RWPE1 (cell line): ENCODE measurements at regions of chr1 and their contacts with region 1.

Region 1: DNA sequence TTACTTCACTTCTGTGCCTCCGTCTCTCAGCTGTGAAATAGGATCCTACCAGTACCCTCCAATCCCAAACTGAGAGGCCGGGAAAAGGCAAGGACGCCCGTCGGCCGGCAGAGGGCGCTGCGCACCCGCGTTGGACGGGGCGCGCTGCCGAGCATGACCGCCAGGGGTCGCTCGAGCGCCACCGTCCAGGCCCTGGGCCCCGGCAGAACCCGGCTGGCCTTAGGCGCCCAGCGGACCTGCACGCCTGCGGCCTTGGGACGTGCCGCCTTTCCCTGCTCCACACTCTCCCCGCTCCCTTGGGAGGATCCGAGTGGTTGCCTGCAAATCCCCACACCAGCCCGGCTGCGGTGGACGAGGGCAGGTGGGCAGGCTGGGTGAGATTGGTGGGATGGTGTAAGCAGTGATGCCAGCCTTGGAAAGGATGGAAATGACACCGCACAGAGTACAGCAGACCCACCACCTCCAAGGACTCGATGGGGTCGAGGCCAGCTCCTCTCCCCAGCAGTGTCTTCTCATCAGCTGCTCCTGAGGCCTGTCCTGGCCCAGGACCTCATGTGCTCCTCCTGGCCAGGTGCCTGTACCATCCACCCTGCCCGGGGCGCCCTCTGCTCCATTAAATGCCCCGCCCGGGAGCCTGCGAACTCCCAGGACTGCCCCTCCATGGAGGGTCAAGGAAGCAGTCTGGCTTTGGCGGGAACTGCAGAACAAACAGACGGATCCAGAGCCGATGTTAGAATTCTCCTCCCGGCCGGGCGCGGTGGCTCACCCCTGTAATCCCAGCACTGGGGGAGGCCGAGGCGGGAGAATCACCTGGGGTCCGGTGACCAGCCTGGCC is 47.4 kb upstream of the LBR start:
- DNase-seq: peak; percentile 85
- H3K27ac ChIP-seq: no peak overlapping the region
- CTCF ChIP-seq: peak; percentile 100

Region 2: GRCh38 chr1:225182716-225183115 is 292.5 kb before region 1 on chr1:
- CTCF ChIA-PET with region 1: no interaction called
- POLR2A ChIA-PET with region 1: no interaction called
- DNase-seq: no peak
- H3K27ac ChIP-seq: no peak overlapping the region
- CTCF ChIP-seq: no peak

Region 3: DNA sequence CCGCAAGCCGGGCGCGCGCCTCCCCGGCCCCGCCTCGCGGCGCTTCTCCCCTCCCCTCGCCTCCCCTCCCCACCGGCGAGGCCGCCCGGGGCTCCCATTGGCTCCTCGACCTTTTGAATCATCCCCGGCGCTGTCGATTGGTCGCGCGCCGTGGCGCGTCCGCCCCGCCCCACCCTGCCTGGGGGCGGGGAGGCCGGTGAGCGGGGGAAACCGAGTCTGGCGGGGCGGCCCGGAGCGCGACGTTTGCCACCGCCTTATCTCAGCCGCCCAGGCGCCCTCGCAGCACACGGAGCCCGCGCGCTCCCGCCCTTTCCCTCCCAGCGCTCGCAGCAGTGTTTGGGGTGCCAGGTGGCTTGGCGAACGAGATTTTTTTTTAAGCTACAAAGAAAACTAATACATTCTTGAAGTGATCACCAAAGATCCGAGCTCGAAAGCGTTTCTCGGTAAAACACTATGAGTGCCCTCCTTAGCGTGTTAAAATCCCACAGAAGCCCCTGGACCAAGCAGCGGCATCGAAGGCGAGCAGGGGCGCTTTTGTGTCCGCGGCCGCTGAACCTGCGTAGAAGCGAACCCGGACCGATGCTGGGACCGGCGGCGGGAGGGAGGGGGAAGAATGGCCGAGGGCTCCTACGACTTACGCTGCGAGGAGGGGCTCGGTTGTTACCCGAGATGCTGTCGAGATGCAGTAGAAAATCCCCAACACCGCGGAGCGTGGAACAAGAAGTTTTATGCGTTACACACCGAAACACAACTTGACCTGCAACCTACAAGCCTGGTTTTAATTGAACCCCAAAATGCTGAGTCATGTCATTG is 46.9 kb before region 1 on chr1:
- CTCF ChIA-PET with region 1: interaction called, 14 read pairs
- POLR2A ChIA-PET with region 1: interaction called, 3 read pairs
- DNase-seq: peak; percentile 98
- H3K27ac ChIP-seq: peak overlapping the region; percentile 94
- CTCF ChIP-seq: no peak

Region 4: GRCh38 chr1:225485991-225486530 is 10.9 kb after region 1 on chr1:
- CTCF ChIA-PET with region 1: interaction called, 34 read pairs
- POLR2A ChIA-PET with region 1: no interaction called
- DNase-seq: no peak
- H3K27ac ChIP-seq: no peak overlapping the region
- CTCF ChIP-seq: no peak

Region 5: GRCh38 chr1:225635649-225636048 is 160.4 kb after region 1 on chr1:
- CTCF ChIA-PET with region 1: no interaction called
- POLR2A ChIA-PET with region 1: no interaction called
- DNase-seq: no peak
- H3K27ac ChIP-seq: no peak overlapping the region
- CTCF ChIP-seq: no peak

Region 6: DNA sequence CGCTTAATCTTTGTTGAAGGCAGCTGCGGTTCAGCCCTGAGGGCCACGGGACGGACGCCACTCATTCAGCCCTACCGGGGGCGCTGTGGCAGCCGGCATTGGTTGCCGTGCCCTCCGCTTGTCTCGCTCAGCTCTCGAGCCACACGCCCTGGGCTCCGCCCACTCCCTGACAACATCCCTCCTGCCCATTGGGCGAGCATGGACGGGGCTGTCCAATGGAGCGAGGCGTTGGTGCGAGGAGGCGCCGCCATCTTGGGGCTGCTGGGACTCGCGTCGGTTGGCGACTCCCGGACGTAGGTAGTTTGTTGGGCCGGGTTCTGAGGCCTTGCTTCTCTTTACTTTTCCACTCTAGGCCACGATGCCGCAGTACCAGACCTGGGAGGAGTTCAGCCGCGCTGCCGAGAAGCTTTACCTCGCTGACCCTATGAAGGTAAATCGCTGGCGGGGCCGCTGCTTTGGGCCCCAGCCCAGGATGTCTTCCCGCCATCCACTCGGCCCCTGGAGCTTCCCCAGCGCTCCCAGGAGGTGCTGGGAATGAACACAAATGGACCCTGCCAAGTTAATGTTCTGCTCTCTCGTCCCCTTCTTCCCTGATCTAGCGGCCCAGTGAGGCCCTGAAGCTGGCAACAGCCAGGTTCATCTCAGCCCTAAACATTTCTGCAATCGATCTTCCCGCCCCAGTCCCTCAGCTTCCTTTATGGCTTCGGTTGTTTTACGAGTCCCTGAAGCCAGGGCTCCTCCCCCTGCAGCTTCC is 302.6 kb after region 1 on chr1 and contains the start of gene SRP9:
- CTCF ChIA-PET with region 1: interaction called, 39 read pairs
- POLR2A ChIA-PET with region 1: interaction called, 3 read pairs
- DNase-seq: peak; percentile 100
- H3K27ac ChIP-seq: peak within 1 kb of the TSS; percentile 98
- CTCF ChIP-seq: peak; percentile 95

Region 7: GRCh38 chr1:225881969-225882693 is 406.9 kb after region 1 on chr1 and contains the start of gene TMEM63A:
- CTCF ChIA-PET with region 1: interaction called, 10 read pairs
- POLR2A ChIA-PET with region 1: no interaction called
- DNase-seq: peak; percentile 97
- H3K27ac ChIP-seq: peak within 1 kb of the TSS; percentile 88
- CTCF ChIP-seq: peak; percentile 50

Region 8: DNA sequence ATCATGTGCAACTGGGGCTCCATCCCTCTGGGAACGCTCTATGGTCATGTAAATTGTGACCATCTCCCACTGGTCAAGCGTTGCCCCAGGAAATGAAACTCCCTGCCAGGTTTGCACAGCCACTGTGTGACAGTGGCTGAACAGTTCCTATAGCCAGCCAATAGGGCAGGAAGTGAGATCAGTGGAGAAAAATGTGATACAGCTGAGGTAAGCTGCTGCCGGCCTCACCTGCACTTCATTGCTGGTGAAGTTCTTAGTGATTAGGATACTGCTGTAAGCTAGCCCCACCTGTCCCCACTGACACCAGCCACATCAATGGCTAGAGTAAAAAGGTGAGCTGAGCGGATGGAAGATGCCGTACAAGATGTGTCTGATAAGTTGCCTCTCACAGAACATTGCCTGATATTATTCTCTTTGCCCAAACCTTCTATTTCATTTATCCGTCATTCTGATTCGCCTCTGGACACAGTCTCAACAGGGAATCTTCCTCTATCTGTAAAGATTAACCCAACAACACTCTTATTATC is 1881.5 kb after region 1 on chr1:
- CTCF ChIA-PET with region 1: no interaction called
- POLR2A ChIA-PET with region 1: interaction called, 10 read pairs
- DNase-seq: peak; percentile 75
- H3K27ac ChIP-seq: peak overlapping the region; percentile 86
- CTCF ChIP-seq: no peak